Common myeloid progenitor, CD34-positive (primary cell): ENCODE measurements at regions of chr16 and their contacts with region 1.

Region 1: GRCh38 chr16:67198238-67198734 is 645 bp upstream of the ELMO3 start:
- DNase-seq: peak; percentile 60 to 77 (median 77)
- H3K4me3 ChIP-seq: no peak overlapping the region
- H3K27ac ChIP-seq: no peak overlapping the region
- H3K4me1 ChIP-seq: peaks cover 0 to 8% (median 4%) of the 10 kb centered on the region in 4 experiments
- H3K27me3 ChIP-seq: no peaks in the 10 kb centered on the region

Region 2: GRCh38 chr16:67183627-67184328 is 14.5 kb before region 1 on chr16 and contains the start of gene MATCAP1:
- CTCF ChIA-PET with region 1: interaction called, 22 read pairs
- POLR2A ChIA-PET with region 1: no interaction called
- DNase-seq: peak; percentile 97 to 98 (median 98)
- H3K4me3 ChIP-seq: peak within 1 kb of the TSS; percentile 72 to 94 (median 81)
- H3K27ac ChIP-seq: peak within 1 kb of the TSS; percentile 88 to 96
- H3K4me1 ChIP-seq: peaks cover 0 to 25% (median 23%) of the 10 kb centered on the region in 4 experiments
- H3K27me3 ChIP-seq: peaks cover 0 to 16% (median 8%) of the 10 kb centered on the region in 5 experiments

Region 3: GRCh38 chr16:67216612-67217490 is 18.6 kb after region 1 on chr16:
- CTCF ChIA-PET with region 1: interaction called, 13 read pairs
- POLR2A ChIA-PET with region 1: interaction called, 3 read pairs
- DNase-seq: peak; percentile 49 to 72 (median 67)
- H3K4me3 ChIP-seq: peak overlapping the region in 2 of 7 experiments; percentile 19 to 59
- H3K27ac ChIP-seq: peak overlapping the region in 1 of 2 experiments; percentile 55
- H3K4me1 ChIP-seq: peaks cover 0 to 35% (median 24%) of the 10 kb centered on the region in 4 experiments
- H3K27me3 ChIP-seq: no peaks in the 10 kb centered on the region